ENCODE measurements at regions of chrX and their contacts with region 1.

Region 1: GRCh38 chrX:42797646-42798269 is 19.8 kb upstream of the PPP1R2C start:
- DNase-seq: no peak
- ATAC-seq: no peak
- H3K4me3 ChIP-seq: no peak overlapping the region
- H3K27ac ChIP-seq: no peak overlapping the region
- H3K4me1 ChIP-seq: no peaks in the 10 kb centered on the region
- H3K27me3 ChIP-seq: no peaks in the 10 kb centered on the region
- CTCF ChIP-seq: no peak
- POLR2A ChIP-seq: no peak
- RAD21 ChIP-seq: no peak

Region 2: GRCh38 chrX:42846741-42847140 is 49.0 kb after region 1 on chrX:
- CTCF ChIA-PET with region 1: no interaction called
- POLR2A ChIA-PET with region 1: no interaction called
- RAD21 ChIA-PET with region 1: no interaction called
- intact Hi-C with region 1: loop called (anchors 2 kb)
- DNase-seq: no peak
- ATAC-seq: no peak
- H3K4me3 ChIP-seq: no peak overlapping the region
- H3K27ac ChIP-seq: no peak overlapping the region
- H3K4me1 ChIP-seq: no peaks in the 10 kb centered on the region
- H3K27me3 ChIP-seq: no peaks in the 10 kb centered on the region
- CTCF ChIP-seq: no peak
- POLR2A ChIP-seq: no peak
- RAD21 ChIP-seq: no peak

Region 3: GRCh38 chrX:42934020-42934726 is 136.4 kb after region 1 on chrX:
- CTCF ChIA-PET with region 1: no interaction called
- POLR2A ChIA-PET with region 1: no interaction called
- RAD21 ChIA-PET with region 1: no interaction called
- intact Hi-C with region 1: no loop called
- DNase-seq: no peak
- ATAC-seq: no peak
- H3K4me3 ChIP-seq: no peak overlapping the region
- H3K27ac ChIP-seq: no peak overlapping the region
- H3K4me1 ChIP-seq: no peaks in the 10 kb centered on the region
- H3K27me3 ChIP-seq: no peaks in the 10 kb centered on the region
- CTCF ChIP-seq: no peak
- POLR2A ChIP-seq: no peak
- RAD21 ChIP-seq: no peak

Region 4: DNA sequence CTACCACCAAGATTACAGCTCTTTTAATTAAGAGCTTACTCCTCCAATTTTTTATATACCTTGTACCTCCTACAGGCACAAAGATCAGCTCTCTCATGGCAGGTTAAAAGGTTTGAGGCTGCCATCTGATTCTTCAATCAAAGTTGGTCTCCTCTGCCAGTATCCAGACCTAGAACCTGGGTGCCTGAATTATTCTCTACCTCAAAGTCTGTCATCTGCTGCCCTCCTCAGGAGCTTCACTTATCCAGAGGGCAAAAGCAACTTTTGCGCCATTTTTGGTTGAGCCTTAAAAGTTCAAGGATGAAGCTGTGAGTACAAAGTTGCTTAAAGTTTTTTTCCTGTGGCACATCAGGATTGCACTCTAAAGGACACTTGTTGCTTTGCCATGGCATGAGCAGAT is 323.9 kb after region 1 on chrX:
- CTCF ChIA-PET with region 1: no interaction called
- POLR2A ChIA-PET with region 1: no interaction called
- RAD21 ChIA-PET with region 1: no interaction called
- intact Hi-C with region 1: no loop called
- DNase-seq: no peak
- ATAC-seq: no peak
- H3K4me3 ChIP-seq: no peak overlapping the region
- H3K27ac ChIP-seq: no peak overlapping the region
- H3K4me1 ChIP-seq: no peaks in the 10 kb centered on the region
- H3K27me3 ChIP-seq: no peaks in the 10 kb centered on the region
- CTCF ChIP-seq: no peak
- POLR2A ChIP-seq: no peak
- RAD21 ChIP-seq: peak; percentile 30; the same call in 1 of the 2 replicates

Region 5: GRCh38 chrX:43969504-43970501 is 1172.0 kb after region 1 on chrX:
- CTCF ChIA-PET with region 1: no interaction called
- POLR2A ChIA-PET with region 1: no interaction called
- RAD21 ChIA-PET with region 1: no interaction called
- intact Hi-C with region 1: no loop called
- DNase-seq: no peak
- ATAC-seq: peak; percentile 44; the same call in 1 of the 2 replicates
- H3K4me3 ChIP-seq: no peak overlapping the region
- H3K27ac ChIP-seq: no peak overlapping the region
- H3K4me1 ChIP-seq: peaks cover 0 to 16% of the 10 kb centered on the region in 2 experiments; a peak in 2 of 4 replicates
- H3K27me3 ChIP-seq: no peaks in the 10 kb centered on the region
- CTCF ChIP-seq: no peak
- POLR2A ChIP-seq: no peak
- RAD21 ChIP-seq: no peak